Tibial artery (tissue), 4 donors: ENCODE measurements at regions of chr7 and their contacts with region 1.

Region 1: DNA sequence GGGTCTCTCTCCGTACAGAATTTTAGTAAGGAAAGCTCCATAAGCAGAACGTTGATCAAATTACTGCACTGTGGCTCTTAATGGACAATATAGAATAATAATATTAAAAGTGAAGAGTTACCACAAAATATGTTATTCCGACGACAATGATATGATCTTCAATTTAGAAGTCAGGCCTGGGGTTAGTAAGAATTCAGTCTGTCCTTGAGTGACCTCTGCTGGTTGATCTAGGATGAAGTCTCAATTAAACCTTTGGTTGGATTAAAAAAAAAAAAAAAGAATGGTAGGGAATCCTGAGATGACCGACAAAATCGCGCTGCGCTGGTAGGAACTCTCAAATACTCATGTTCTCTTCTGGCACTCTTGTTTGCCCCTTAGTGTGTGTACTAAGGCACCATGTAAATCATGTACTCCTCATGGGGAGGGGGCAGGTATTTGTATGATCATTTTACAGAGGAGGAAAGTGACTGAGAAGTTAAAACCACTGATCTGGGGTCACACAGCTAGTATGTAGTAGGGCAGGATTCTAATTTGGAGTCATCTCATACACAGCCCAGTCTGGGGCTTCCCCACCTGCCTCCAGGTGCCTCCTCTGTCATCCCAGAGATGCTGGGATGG is 161.3 kb upstream of the NPVF start:
- DNase-seq: no peak
- H3K4me3 ChIP-seq: no peak overlapping the region
- H3K27ac ChIP-seq: no peak overlapping the region
- H3K4me1 ChIP-seq: peaks cover 0 to 32% (median 14%) of the 10 kb centered on the region in 4 donors
- H3K27me3 ChIP-seq: no peaks in the 10 kb centered on the region
- CTCF ChIP-seq: peak; percentile 57 to 58

Region 2: DNA sequence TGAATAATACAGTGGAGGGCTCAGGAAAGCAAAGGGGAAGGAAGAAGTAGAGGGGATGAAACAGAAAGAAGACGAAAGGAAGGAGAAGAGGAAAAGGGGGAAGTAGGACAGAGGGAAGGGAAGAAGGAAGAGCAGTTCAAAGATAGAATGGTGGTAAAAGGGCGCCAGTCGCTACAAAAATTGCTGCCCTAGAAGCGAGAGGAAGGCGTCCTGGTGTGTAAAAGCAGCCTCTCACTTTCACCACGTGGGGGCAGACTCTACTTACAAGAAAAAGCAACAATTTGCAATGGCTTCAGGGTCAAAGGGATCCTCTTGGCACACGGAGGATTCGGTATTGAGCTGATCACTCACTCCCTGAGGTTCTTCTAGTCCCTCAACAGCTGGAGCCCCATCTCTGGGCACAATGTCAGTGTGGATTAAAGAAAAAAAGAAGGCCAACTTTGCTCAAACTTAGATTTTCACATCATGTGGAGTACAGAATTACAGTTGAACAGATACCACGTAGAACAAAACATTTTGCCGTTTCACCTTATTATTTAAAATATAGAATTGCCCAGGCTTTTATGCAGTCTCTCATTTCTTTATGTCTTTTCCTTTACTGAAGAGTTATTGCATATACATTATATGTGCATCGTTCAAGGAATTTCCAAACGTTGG is 129.9 kb before region 1 on chr7:
- intact Hi-C with region 1: loop called (anchors 2 kb)
- DNase-seq: peak; percentile 66 to 76
- H3K4me3 ChIP-seq: no peak overlapping the region
- H3K27ac ChIP-seq: no peak overlapping the region
- H3K4me1 ChIP-seq: no peaks in the 10 kb centered on the region
- H3K27me3 ChIP-seq: no peaks in the 10 kb centered on the region
- CTCF ChIP-seq: peak; percentile 75 to 80

Region 3: DNA sequence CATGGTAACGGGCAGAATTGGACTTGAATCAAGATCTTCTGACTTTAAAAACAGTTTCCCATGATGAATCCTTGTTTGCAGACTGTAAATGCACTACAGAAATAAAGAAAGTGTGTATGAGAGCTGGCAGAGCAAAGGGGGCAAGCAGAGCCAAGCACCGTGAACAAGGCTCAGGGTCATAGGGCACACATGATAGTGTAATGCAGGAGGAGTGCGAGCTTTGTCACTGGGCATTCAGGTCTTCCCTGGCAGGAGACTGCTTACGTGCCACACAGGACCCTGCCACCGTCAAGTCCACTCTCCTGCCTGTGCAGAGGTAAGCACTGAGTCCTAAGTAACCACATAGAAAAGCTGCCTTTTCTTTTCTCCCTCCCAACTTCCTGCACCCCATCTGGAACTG is 68.2 kb before region 1 on chr7:
- intact Hi-C with region 1: no loop called
- DNase-seq: no peak
- H3K4me3 ChIP-seq: no peak overlapping the region
- H3K27ac ChIP-seq: no peak overlapping the region
- H3K4me1 ChIP-seq: no peaks in the 10 kb centered on the region
- H3K27me3 ChIP-seq: peaks cover 0 to 7% of the 10 kb centered on the region in 2 donors
- CTCF ChIP-seq: no peak

Region 4: DNA sequence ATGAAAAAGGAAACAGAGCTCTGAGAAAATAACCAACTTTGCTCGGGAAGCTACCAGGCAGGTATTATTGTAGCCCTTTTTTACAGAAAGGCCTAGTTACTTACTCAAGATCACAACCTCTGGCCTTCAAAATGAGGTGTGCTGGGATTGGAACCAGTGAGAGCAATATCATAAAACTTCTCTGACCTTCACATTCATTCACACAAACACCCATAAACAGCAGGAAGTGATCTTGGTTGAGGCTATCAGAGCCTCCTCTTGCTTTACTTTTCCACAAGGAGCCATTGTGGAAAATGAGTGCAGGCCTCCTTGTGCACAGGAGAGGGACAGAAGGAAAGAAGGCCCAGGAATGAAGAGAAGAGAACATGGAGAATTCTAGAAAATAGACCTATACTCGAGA is 43.2 kb after region 1 on chr7:
- intact Hi-C with region 1: no loop called
- DNase-seq: no peak
- H3K4me3 ChIP-seq: no peak overlapping the region
- H3K27ac ChIP-seq: no peak overlapping the region
- H3K4me1 ChIP-seq: peaks cover 0 to 23% (median 14%) of the 10 kb centered on the region in 4 donors
- H3K27me3 ChIP-seq: no peaks in the 10 kb centered on the region
- CTCF ChIP-seq: no peak

Region 5: DNA sequence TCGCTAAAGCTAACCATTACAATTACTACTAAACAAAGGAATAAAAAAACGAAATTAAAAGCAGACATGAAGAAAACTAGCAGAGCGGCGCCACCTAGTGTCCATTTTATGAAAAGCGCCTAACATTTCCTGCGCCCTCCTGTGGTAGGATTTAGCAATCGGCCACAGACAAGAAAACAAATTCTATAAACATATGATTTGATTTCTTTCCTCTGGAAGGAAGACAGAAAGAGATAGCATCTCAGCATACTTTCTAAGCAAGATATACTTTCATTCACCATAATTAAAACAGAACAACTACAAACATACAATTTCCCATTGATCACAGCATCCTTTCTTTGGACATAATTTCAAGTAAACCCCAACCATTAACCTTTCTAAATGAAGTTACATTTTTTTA is 176.4 kb after region 1 on chr7:
- intact Hi-C with region 1: loop called (anchors 2 kb)
- DNase-seq: peak; percentile 58 to 75
- H3K4me3 ChIP-seq: peak overlapping the region in 1 of 2 donors; percentile 17
- H3K27ac ChIP-seq: peak overlapping the region; percentile 72 to 74
- H3K4me1 ChIP-seq: peaks cover 0 to 41% (median 20%) of the 10 kb centered on the region in 4 donors
- H3K27me3 ChIP-seq: no peaks in the 10 kb centered on the region
- CTCF ChIP-seq: peak; percentile 100

Region 6: DNA sequence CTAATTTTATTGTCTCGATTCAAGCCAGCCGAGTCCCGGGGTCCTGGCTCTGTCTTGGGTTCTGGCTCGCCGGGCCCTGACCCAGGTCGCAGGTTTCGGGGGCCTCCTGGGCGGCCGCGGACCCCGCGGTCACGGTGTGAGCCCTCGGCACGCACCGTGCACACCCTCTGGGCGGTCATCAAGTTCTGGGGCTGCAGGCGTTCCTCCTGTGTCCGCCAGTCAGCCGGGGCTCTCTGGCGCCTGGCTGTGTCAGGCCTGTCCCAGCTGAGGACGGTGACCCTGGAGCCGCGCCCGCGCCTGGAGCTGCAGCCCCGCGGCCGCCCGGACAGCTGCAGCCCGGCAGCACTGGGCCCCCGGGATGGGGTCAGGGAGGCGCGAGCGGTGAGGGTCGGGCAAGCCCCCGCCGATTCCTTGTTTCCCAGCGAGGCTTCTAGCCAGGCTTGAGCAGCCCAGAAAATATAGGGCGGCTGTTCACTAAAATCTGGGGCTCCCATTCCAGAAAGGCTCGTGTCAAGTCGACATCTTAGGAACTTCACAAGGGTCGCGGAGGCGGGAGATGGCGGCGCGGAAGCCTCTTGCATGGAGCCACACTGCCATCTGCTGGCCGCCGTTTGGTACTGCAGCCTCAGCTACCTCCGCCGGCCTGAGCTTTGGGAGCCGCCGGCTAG is 1771.1 kb after region 1 on chr7:
- intact Hi-C with region 1: loop called (anchors 10 kb)
- DNase-seq: peak; percentile 90
- H3K4me3 ChIP-seq: peak overlapping the region; percentile 68 to 91
- H3K27ac ChIP-seq: peak overlapping the region; percentile 82 to 96
- H3K4me1 ChIP-seq: peaks cover 0 to 43% (median 17%) of the 10 kb centered on the region in 4 donors
- H3K27me3 ChIP-seq: no peaks in the 10 kb centered on the region
- CTCF ChIP-seq: peak; percentile 98 to 99